Testis (tissue), 5 donors: ENCODE measurements at regions of chr18 and their contacts with region 1.

Region 1: DNA sequence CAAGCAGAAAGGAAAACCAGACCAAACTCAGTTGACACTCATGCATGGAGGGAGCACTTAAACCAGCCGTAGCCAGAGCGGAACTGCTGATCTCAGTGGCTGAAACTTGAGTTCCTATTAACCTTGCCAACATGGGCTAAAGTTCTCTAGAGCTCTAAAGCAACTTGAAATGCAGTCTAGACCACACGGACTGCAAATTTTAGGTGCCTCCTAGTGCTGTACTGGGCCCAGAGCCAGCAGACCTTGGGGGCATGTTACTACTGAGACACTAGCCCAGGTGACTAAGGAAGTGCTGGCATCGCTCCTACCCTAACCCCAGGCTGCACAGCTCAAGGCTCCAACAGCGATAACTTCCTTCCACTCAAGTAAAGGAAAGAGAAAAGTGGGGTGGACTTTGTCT is 236.5 kb downstream of the AKAIN1 start:
- DNase-seq: no peak
- H3K4me3 ChIP-seq: no peak overlapping the region
- H3K27ac ChIP-seq: no peak overlapping the region
- H3K4me1 ChIP-seq: no peaks in the 10 kb centered on the region
- H3K27me3 ChIP-seq: no peaks in the 10 kb centered on the region
- CTCF ChIP-seq: no peak
- POLR2A ChIP-seq: no peak

Region 2: GRCh38 chr18:3794537-3795348 is 1165.8 kb before region 1 on chr18:
- intact Hi-C with region 1: loop called (anchors 5 kb)
- DNase-seq: no peak
- H3K4me3 ChIP-seq: no peak overlapping the region
- H3K27ac ChIP-seq: no peak overlapping the region
- H3K4me1 ChIP-seq: no peaks in the 10 kb centered on the region
- H3K27me3 ChIP-seq: no peaks in the 10 kb centered on the region
- CTCF ChIP-seq: no peak
- POLR2A ChIP-seq: no peak

Region 3: DNA sequence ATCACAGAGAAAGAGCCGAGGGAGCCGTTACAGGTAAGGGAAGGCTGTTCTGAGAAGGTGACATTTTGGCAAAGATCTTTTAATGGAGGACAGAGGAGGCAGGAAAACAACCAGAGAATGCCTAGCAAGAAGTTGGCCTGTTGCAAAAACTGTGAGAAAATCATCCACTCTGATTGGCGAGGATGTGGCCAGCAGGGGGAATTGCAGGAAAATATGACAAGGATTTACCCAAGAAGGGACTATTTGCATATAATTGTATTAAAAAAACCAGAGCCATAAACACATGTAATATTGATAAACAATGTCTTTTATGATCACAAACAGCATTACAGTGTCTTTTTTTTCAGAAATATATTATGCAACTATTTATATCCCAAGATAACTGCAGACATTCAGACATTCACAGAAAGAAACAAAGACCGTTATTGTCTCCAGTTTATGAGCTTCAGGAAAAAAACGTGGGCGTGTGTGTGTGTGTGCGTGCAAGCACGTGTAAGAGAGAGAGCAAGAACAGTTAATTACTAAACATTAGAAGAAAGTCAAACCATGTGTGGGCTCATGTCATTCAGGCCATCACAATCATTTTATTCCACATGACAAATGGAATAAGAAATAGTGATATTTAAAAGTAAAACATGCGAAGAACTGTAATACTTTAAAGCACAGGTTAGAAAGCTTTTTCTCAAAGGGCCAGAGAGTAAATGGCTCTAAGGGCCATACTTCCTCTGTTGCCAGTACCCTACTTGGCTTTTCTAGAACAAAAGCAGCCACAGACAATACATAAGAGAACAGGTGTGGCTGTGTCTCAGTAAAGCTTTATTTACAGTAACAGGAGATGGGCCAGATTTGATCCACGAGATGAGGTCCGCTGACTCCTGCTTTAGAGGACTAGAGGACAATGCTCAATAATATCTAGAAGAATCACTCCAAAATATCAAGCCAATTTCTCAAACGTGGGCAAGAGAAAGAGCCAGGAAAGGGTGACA is 829.6 kb before region 1 on chr18:
- intact Hi-C with region 1: no loop called
- DNase-seq: peak; percentile 28
- H3K4me3 ChIP-seq: no peak overlapping the region
- H3K27ac ChIP-seq: peak overlapping the region in 1 of 2 donors; percentile 24
- H3K4me1 ChIP-seq: no peaks in the 10 kb centered on the region
- H3K27me3 ChIP-seq: no peaks in the 10 kb centered on the region
- CTCF ChIP-seq: peak; percentile 19 to 40 (median 23)
- POLR2A ChIP-seq: no peak